ENCODE measurements at regions of chrX and their contacts with region 1.

Region 1: DNA sequence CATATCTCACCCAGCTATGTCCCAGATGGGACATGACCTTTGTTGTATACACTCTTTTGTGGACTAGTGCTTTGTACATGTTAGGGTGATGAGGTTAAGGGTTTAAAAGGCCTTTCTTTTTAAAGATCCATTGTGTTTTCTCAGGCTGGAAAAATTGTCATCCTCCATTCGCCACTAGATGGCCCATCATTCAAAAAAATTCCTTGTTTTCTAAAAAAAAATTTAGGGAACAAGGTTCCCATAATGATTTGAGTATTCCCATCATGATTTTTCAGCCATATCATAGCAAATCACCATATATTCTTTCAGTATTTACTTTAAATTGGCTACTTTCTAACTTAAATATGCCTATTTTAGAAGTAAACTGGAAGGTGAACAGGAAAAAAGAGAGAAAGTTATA is 91.9 kb upstream of the TMEM164 start:
- DNase-seq: no peak
- ATAC-seq: no peak
- H3K4me3 ChIP-seq: no peak overlapping the region
- H3K27ac ChIP-seq: no peak overlapping the region
- H3K4me1 ChIP-seq: no peaks in the 10 kb centered on the region
- H3K27me3 ChIP-seq: peaks cover 0 to 48% (median 0%) of the 10 kb centered on the region in 7 donors
- CTCF ChIP-seq: peak in 8 of 9 donors; percentile 20 to 64 (median 53)

Region 2: GRCh38 chrX:110002300-110003166 is 91.5 kb after region 1 on chrX and contains the start of gene TMEM164:
- intact Hi-C with region 1: loop called in 1 of 10 experiments (anchors 10 kb)
- DNase-seq: peak; percentile 85 to 89
- ATAC-seq: peak; percentile 91 to 97 (median 94)
- H3K4me3 ChIP-seq: peak within 1 kb of the TSS; percentile 25 to 79 (median 68)
- H3K27ac ChIP-seq: peak within 1 kb of the TSS; percentile 79 to 92 (median 88)
- H3K4me1 ChIP-seq: peaks cover 0 to 34% (median 10%) of the 10 kb centered on the region in 9 donors
- H3K27me3 ChIP-seq: peaks cover 0 to 40% (median 0%) of the 10 kb centered on the region in 7 donors
- CTCF ChIP-seq: peak in 3 of 9 donors; percentile 11 to 39 (median 15)
- total RNA-seq, gene TMEM164: 43.0 to 60.6 (median 49.1) TPM

Region 3: DNA sequence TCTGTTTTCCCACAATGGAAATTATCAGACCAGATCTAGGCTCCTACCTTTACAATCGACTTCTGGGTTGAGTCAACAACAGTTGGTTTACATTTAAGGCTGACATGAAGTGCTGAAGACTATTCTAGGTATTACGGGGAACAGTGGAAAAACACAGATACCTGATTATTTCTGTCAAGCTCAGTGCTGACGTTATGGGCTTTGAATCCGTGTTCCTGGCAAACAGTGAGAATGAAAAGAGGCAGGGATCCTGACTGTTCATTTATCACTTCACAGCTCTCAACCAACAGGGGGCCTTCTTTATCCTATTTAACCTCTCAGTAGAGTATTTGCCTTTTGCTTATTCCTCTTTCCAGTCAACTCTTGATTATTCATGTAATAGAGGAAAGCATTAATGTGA is 135.0 kb after region 1 on chrX:
- intact Hi-C with region 1: loop called in 1 of 10 experiments (anchors 10 kb)
- DNase-seq: no peak
- ATAC-seq: peak; percentile 26 to 79 (median 58)
- H3K4me3 ChIP-seq: peak overlapping the region in 1 of 10 donors; percentile 21
- H3K27ac ChIP-seq: peak overlapping the region in 6 of 10 donors; percentile 61 to 81 (median 70)
- H3K4me1 ChIP-seq: peaks cover 0 to 39% (median 10%) of the 10 kb centered on the region in 9 donors
- H3K27me3 ChIP-seq: peaks cover 0 to 5% (median 0%) of the 10 kb centered on the region in 7 donors
- CTCF ChIP-seq: peak in 3 of 9 donors; percentile 13 to 31 (median 18)

Region 4: GRCh38 chrX:110133735-110134370 is 222.8 kb after region 1 on chrX:
- intact Hi-C with region 1: loop called in 1 of 10 experiments (anchors 5 kb)
- DNase-seq: no peak
- ATAC-seq: no peak
- H3K4me3 ChIP-seq: no peak overlapping the region
- H3K27ac ChIP-seq: no peak overlapping the region
- H3K4me1 ChIP-seq: peaks cover 0 to 6% (median 0%) of the 10 kb centered on the region in 9 donors
- H3K27me3 ChIP-seq: peaks cover 0 to 28% (median 0%) of the 10 kb centered on the region in 7 donors
- CTCF ChIP-seq: no peak

Region 5: DNA sequence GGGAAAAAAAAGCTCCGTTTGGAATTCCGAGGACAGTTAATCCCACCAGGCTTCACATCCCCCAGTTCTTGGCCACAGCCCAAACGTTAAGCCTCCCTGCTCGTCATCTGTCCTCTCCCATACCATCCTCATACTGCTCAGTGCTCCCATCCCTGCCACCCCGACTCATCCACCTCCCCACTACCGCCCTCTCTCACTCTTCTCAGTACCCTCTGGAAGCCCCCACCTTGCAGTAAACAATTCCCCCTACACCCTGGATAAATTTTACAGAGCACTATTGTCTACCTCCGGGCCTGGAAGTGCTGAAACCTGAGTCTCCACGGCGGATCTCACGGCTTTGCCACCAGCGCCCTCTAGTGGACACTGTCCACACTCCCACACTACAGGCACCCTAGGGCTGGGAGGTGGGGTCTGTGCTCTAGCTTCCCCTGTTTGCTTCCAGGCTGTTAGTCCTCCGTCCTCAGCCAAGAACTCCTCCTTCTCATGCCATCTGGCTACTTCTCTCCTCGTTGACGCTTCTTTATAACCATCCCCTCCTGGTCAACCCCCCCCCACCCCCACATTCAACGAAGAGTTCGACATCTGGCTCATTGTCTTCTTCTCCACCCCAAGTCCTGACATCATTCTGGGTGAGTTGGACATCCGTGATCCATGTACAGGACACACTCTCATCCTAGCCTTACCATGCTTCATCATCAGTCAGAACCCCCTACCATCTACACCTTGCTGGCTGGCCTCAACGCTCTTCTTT is 502.1 kb after region 1 on chrX:
- intact Hi-C with region 1: loop called in 1 of 10 experiments (anchors 10 kb)
- DNase-seq: peak; percentile 49 to 51
- ATAC-seq: peak; percentile 76 to 92 (median 88)
- H3K4me3 ChIP-seq: no peak overlapping the region
- H3K27ac ChIP-seq: no peak overlapping the region
- H3K4me1 ChIP-seq: peaks cover 0 to 13% (median 0%) of the 10 kb centered on the region in 9 donors
- H3K27me3 ChIP-seq: peaks cover 0 to 67% (median 0%) of the 10 kb centered on the region in 7 donors
- CTCF ChIP-seq: peak; percentile 50 to 90 (median 76)

Measured in heart right ventricle (tissue), 16 donors.